HepG2 (cell line): ENCODE measurements at regions of chr20 and their contacts with region 1.

Region 1: GRCh38 chr20:58179432-58180099 is 48.9 kb downstream of the ANKRD60 start:
- DNase-seq: peak; percentile 21
- ATAC-seq: peak; percentile 89
- H3K4me3 ChIP-seq: peak overlapping the region in 1 of 3 experiments; percentile 12; a peak in 1 of 6 replicates
- H3K27ac ChIP-seq: no peak overlapping the region
- H3K4me1 ChIP-seq: 0 out of 2 replicates have a peak, but pooled peaks cover 4% of the 10 kb centered on the region
- H3K27me3 ChIP-seq: peaks cover 17 to 61% of the 10 kb centered on the region in 2 experiments
- CTCF ChIP-seq: peak; percentile 94
- EP300 ChIP-seq: no peak
- POLR2A ChIP-seq: no peak
- RAD21 ChIP-seq: peak; percentile 95

Region 2: DNA sequence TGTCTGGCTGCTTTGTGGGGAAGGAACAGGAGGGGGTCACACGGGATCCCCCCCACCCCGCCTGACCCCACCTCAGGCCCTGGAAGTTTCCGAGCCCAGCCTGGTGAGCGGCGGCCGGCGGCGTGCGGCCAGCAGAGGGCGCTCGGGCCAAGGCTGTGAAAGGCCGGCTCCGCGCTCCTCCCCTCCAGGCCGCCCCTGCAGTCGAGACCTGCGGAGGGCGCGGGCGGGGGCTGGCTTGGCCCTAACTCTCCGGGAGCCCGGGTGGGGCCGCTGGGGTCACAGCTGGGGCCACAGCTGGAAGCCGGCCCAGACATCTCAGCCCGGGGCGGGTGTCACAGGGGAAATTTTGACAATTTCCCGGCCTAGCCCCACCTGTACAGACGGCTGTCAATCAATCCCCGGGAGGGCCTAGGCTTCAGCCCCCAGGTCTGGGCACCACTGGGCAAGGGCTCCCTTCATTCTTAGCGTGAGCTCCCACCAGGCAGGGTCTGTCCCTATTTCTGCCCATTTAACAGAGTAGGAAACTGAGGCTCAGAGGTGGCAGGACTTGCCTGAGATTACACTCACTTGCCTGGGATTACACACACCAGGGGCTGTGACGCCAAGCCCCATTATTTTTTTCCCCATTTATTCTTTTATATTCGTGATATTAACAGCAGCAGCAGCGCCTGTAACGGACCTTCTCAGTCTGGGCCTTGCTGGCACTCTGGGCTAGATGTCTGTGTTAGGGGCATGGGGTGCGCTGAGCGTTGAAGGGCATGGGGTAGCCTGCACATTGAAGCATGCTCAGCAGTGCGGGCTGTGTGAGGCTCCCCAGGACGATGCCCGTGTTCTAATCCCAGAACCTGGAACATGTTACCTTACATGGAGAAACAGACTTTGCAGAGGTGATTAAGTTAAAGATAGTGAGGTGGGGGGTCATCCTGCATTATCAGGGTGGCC is 582.3 kb before region 1 on chr20:
- CTCF ChIA-PET with region 1: interaction called, 12 read pairs
- POLR2A ChIA-PET with region 1: no interaction called
- in situ Hi-C with region 1: no loop called
- intact Hi-C with region 1: no loop called
- DNase-seq: peak; percentile 43
- ATAC-seq: peak; percentile 75
- H3K4me3 ChIP-seq: peak overlapping the region in 1 of 3 experiments; percentile 27; a peak in 1 of 6 replicates
- H3K27ac ChIP-seq: no peak overlapping the region
- H3K4me1 ChIP-seq: peaks cover 25% of the 10 kb centered on the region
- H3K27me3 ChIP-seq: peaks cover 0 to 36% of the 10 kb centered on the region in 2 experiments; a peak in 4 of 5 replicates
- CTCF ChIP-seq: peak; percentile 98
- EP300 ChIP-seq: 0 out of 4 replicates have a peak, but pooled peaks of 1 of the 2 experiments have one; percentile 16
- POLR2A ChIP-seq: no peak
- RAD21 ChIP-seq: peak; percentile 97

Region 3: GRCh38 chr20:57622579-57623377 is 556.8 kb before region 1 on chr20:
- CTCF ChIA-PET with region 1: interaction called, 5 read pairs
- POLR2A ChIA-PET with region 1: no interaction called
- in situ Hi-C with region 1: no loop called
- intact Hi-C with region 1: loop called (anchors 1 kb)
- DNase-seq: peak; percentile 41
- ATAC-seq: peak; percentile 92
- H3K4me3 ChIP-seq: no peak overlapping the region
- H3K27ac ChIP-seq: no peak overlapping the region
- H3K4me1 ChIP-seq: no peaks in the 10 kb centered on the region
- H3K27me3 ChIP-seq: peaks cover 2 to 58% of the 10 kb centered on the region in 2 experiments; a peak in 4 of 5 replicates
- CTCF ChIP-seq: peak; percentile 88
- EP300 ChIP-seq: no peak
- POLR2A ChIP-seq: no peak
- RAD21 ChIP-seq: peak; percentile 68

Region 4: GRCh38 chr20:57654363-57654997 is 525.1 kb before region 1 on chr20:
- CTCF ChIA-PET with region 1: interaction called, 18 read pairs
- POLR2A ChIA-PET with region 1: no interaction called
- in situ Hi-C with region 1: loop called (anchors 5 kb)
- intact Hi-C with region 1: loop called (anchors 1 kb)
- DNase-seq: peak; percentile 42
- ATAC-seq: peak; percentile 74
- H3K4me3 ChIP-seq: no peak overlapping the region
- H3K27ac ChIP-seq: no peak overlapping the region
- H3K4me1 ChIP-seq: peaks cover 13% of the 10 kb centered on the region
- H3K27me3 ChIP-seq: peaks cover 35 to 97% of the 10 kb centered on the region in 2 experiments
- CTCF ChIP-seq: peak; percentile 92
- EP300 ChIP-seq: no peak
- POLR2A ChIP-seq: no peak
- RAD21 ChIP-seq: peak; percentile 69